Right cardiac atrium (tissue), 5 donors: ENCODE measurements at regions of chr16 and their contacts with region 1.

Region 1: DNA sequence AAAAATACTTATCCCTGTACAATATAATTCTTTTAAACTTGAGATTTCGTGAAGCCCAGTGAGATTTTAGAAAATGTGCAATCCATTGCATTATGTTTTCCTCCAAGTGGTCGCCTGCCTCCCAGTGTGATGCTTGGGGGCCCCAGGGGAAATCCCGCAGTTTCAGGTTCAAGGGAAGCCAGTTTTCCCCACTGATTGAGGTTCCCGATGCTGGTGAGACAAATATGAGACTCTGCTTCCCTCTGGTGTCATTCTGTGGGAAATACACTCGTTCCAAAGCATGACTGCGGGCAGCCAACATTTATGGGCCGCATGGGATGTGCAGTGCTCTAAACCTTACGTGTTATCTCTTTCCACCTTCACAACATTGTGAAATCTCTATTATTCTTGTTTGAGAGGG is 200.8 kb downstream of the PRKCB start:
- DNase-seq: peak in 1 of 3 donors; percentile 17
- ATAC-seq: peak; percentile 59 to 61
- H3K4me3 ChIP-seq: no peak overlapping the region
- H3K27ac ChIP-seq: no peak overlapping the region
- H3K4me1 ChIP-seq: no peaks in the 10 kb centered on the region
- H3K27me3 ChIP-seq: no peaks in the 10 kb centered on the region

Region 2: GRCh38 chr16:23729503-23730424 is 306.9 kb before region 1 on chr16:
- intact Hi-C with region 1: loop called in 1 of 4 experiments (anchors 10 kb)
- DNase-seq: no peak
- ATAC-seq: peak in 1 of 2 donors; percentile 33
- H3K4me3 ChIP-seq: no peak overlapping the region
- H3K27ac ChIP-seq: no peak overlapping the region
- H3K4me1 ChIP-seq: peaks cover 1% of the 10 kb centered on the region
- H3K27me3 ChIP-seq: no peaks in the 10 kb centered on the region

Region 3: GRCh38 chr16:23739516-23739915 is 297.1 kb before region 1 on chr16:
- intact Hi-C with region 1: loop called in 2 of 4 experiments (anchors 5 to 10 kb)
- DNase-seq: no peak
- ATAC-seq: no peak
- H3K4me3 ChIP-seq: no peak overlapping the region
- H3K27ac ChIP-seq: no peak overlapping the region
- H3K4me1 ChIP-seq: no peaks in the 10 kb centered on the region
- H3K27me3 ChIP-seq: peaks cover 3% of the 10 kb centered on the region

Region 4: DNA sequence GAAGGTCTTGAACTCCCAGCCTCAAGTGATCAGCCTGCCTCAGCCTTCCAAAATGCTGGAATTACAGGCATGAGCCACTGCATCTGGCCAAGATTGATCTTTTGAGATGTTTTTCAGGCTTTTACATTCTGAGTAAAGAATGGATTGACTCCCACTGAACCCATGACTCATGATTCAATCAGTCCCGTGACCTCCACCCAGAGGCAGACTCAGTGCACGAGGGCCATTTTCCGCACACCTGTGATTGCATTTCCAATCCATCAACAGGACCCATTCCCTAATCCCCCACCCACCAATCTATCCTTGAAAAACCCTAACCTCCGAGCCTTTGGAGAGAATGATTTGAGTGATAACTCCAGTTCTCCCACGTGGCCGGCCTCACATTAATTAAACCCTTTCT is 241.2 kb before region 1 on chr16:
- intact Hi-C with region 1: loop called in 3 of 4 experiments (anchors 5 to 10 kb)
- DNase-seq: no peak
- ATAC-seq: no peak
- H3K4me3 ChIP-seq: no peak overlapping the region
- H3K27ac ChIP-seq: no peak overlapping the region
- H3K4me1 ChIP-seq: no peaks in the 10 kb centered on the region
- H3K27me3 ChIP-seq: no peaks in the 10 kb centered on the region

Region 5: GRCh38 chr16:23803591-23804123 is 233.0 kb before region 1 on chr16:
- intact Hi-C with region 1: loop called in 3 of 4 experiments (anchors 5 to 10 kb)
- DNase-seq: peak; percentile 52 to 70 (median 65)
- ATAC-seq: peak in 1 of 2 donors; percentile 78
- H3K4me3 ChIP-seq: no peak overlapping the region
- H3K27ac ChIP-seq: no peak overlapping the region
- H3K4me1 ChIP-seq: no peaks in the 10 kb centered on the region
- H3K27me3 ChIP-seq: no peaks in the 10 kb centered on the region

Region 6: DNA sequence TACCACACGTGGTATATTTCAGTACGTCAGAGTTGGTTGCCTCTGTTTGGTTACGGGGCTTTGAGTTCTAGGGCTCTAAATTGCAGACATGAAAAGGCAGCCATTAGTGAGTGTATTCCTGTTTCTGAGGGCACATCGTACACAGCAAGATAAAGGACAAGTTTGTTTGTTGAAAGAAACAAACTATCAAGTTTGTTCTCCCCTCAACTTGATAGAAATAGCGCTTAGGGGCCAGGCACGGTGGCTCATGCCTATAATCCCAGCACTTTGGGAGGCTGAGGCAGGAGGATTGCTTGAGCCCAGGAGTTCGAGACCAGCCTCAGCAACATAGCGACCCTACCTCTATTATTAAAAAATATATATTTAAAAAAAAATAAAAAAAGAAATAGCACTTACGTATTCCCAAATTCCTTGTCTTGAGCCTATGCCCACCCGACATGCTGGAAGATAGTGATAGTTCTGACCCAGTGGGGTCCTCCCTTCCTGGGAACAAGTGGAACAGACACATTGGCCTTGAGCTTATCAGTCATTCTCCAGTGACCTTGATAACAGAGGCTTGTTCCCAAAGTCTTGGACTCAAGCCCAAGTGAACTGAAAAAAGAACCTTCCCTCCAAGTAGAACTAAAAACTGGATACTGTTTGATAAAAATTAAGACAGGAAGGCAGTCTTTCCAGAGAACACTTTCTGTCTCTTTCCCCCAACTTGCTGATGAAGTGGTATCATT is 79.6 kb after region 1 on chr16:
- intact Hi-C with region 1: no loop called
- DNase-seq: no peak
- ATAC-seq: peak; percentile 72 to 87
- H3K4me3 ChIP-seq: no peak overlapping the region
- H3K27ac ChIP-seq: no peak overlapping the region
- H3K4me1 ChIP-seq: peaks cover 4% of the 10 kb centered on the region
- H3K27me3 ChIP-seq: no peaks in the 10 kb centered on the region